ENCODE measurements at regions of chr3 and their contacts with region 1.

Region 1: GRCh38 chr3:158727206-158728060 is 4.8 kb downstream of the RARRES1 start:
- DNase-seq: peak in 1 of 3 donors; percentile 84
- ATAC-seq: peak; percentile 30
- H3K4me3 ChIP-seq: no peak overlapping the region
- H3K4me1 ChIP-seq: peaks cover 61% of the 10 kb centered on the region
- CTCF ChIP-seq: peak; percentile 66

Region 2: GRCh38 chr3:157999246-157999645 is 728.2 kb before region 1 on chr3:
- intact Hi-C with region 1: no loop called
- DNase-seq: no peak
- ATAC-seq: no peak
- H3K4me3 ChIP-seq: no peak overlapping the region
- H3K4me1 ChIP-seq: no peaks in the 10 kb centered on the region
- CTCF ChIP-seq: no peak

Region 3: DNA sequence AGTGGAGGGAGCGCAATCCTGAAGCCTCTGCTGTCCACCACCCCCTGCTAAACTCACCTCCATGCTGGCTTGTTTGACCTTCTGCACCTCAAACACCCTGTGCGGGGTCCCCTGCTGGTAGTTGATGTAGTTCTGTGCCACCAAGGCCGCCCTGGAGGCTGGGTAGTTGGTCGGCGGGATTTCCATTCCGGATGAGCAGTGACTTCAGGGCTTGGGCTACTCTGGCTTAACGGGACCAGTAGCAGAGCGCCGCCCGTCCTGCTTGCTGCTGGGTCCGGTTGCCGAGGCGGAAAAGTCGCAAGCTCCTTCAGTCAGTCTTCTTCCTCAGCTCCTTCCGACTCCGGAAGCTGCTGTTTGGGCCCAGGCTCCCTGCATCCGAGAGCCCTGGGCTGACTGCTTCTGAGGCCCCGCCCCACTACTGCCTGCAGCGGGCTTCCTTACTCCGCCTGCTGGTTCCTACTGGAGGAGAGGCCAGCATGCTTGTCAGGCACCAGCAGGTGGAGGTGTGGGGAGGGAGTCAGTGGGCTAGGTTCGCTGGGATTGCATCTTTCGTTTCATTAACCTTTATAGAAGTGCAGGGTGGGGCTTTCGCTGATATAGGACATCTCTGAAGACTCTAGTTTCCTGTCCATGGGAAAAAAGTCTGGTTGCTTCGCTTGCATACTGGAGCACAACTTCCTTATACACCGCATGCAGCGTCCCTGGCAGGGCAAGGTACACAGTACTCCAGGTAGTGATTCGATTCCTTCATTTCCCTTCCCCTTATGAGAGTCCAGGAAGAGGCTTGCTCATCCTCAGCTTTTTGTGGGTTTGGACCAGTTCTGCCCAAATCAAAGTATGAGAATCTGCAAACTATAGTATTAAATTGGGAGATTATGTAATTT is 54.9 kb before region 1 on chr3 and contains the start of gene LXN:
- intact Hi-C with region 1: loop called in 1 of 2 experiments (anchors 5 kb)
- DNase-seq: peak; percentile 94 to 95 (median 94)
- ATAC-seq: peak; percentile 99
- H3K4me3 ChIP-seq: peak within 1 kb of the TSS; percentile 22
- H3K4me1 ChIP-seq: peaks cover 6% of the 10 kb centered on the region
- CTCF ChIP-seq: peak; percentile 76
- total RNA-seq, gene LXN: 17.9 to 62.6 (median 48.9) TPM

Measured in mucosa of descending colon (tissue), 3 donors.